Panc1 (cell line): ENCODE measurements at regions of chr18 and their contacts with region 1.

Region 1: GRCh38 chr18:24878289-24878688 is 417.9 kb downstream of the HRH4 start:
- DNase-seq: no peak
- ATAC-seq: no peak; the same call in 1 of the 2 replicates
- H3K4me3 ChIP-seq: no peak overlapping the region
- H3K27ac ChIP-seq: no peak overlapping the region
- H3K4me1 ChIP-seq: no peaks in the 10 kb centered on the region
- H3K27me3 ChIP-seq: no peaks in the 10 kb centered on the region
- CTCF ChIP-seq: peak; percentile 46; the same call in 1 of the 2 replicates

Region 2: GRCh38 chr18:24930971-24931370 is 52.7 kb after region 1 on chr18:
- CTCF ChIA-PET with region 1: no interaction called
- POLR2A ChIA-PET with region 1: no interaction called
- in situ Hi-C with region 1: no loop called
- intact Hi-C with region 1: loop called (anchors 5 kb)
- DNase-seq: no peak
- ATAC-seq: peak; percentile 45; the same call in 1 of the 2 replicates
- H3K4me3 ChIP-seq: no peak overlapping the region
- H3K27ac ChIP-seq: no peak overlapping the region
- H3K4me1 ChIP-seq: no peaks in the 10 kb centered on the region; the same call in 1 of the 2 replicates
- H3K27me3 ChIP-seq: no peaks in the 10 kb centered on the region
- CTCF ChIP-seq: no peak

Region 3: DNA sequence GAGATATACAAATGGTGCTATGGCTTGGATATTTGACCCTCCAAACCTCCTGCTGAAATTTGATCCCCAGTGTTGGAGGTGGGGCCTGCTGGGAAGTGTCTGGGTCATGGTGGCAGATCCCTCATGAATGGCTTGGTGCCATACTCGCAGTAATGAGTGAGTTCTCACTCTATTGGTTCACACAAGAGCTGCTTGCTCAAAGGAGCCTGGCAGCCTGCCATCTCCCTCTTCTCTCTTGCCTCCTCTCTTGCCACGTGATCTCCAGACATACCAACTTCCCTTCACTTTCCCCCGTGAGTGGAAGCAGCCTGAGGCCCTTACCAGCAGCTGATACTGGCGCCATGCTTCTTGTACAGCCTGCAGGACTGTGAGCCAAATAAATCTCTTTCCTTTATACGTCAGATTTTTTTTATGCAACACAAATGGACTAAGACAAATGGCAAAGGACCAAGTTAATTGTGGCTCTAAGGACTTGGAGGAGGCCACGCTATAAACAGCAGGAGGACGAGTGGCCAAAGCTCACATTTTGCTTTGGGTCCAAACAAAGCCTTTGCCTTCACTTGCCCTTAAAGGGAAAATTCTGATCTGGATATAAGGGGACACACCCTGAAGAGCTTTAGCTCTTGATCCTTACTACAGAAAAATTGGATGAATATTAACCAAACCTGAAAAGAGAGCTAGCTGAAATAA is 997.4 kb after region 1 on chr18:
- CTCF ChIA-PET with region 1: no interaction called
- POLR2A ChIA-PET with region 1: no interaction called
- in situ Hi-C with region 1: no loop called
- intact Hi-C with region 1: no loop called
- DNase-seq: no peak
- ATAC-seq: no peak
- H3K4me3 ChIP-seq: no peak overlapping the region
- H3K27ac ChIP-seq: no peak overlapping the region
- H3K4me1 ChIP-seq: no peaks in the 10 kb centered on the region
- H3K27me3 ChIP-seq: no peaks in the 10 kb centered on the region
- CTCF ChIP-seq: no peak